ENCODE measurements at regions of chr10 and their contacts with region 1.

Region 1: GRCh38 chr10:62050893-62051433 is 149.5 kb downstream of the ARID5B start:
- DNase-seq: peak; percentile 80 to 87
- ATAC-seq: peak; percentile 62 to 70
- H3K4me3 ChIP-seq: peak overlapping the region; percentile 70 to 79 (median 74)
- H3K27ac ChIP-seq: peak overlapping the region; percentile 95 to 99 (median 96)
- H3K4me1 ChIP-seq: peaks cover 35 to 64% of the 10 kb centered on the region in 2 donors
- H3K27me3 ChIP-seq: no peaks in the 10 kb centered on the region
- CTCF ChIP-seq: no peak
- POLR2A ChIP-seq: peak; percentile 81 to 94

Region 2: DNA sequence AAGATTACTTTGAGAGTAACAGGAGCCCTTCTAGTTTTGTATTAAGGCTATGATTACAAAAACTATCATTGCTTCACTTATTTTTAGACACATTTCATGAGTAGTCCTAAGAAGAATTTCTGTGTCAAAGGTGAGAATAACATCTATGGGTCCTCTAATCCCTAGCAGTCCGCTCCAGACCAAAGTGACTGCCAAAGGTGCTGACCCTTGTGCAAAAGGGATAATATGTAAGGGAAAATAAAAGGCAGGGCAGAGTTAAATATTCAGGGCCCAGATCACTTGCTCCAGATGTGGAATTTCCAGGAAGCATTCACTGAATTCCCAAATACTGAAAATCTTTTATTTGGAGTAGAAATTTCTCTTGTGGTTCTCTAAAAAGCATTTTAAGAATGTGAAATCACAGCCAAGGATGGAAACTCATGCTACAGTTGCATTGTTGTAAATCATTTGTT is 1136.2 kb before region 1 on chr10:
- in situ Hi-C with region 1: loop called in 1 of 4 experiments (anchors 25 kb)
- intact Hi-C with region 1: no loop called
- DNase-seq: peak in 1 of 2 donors; percentile 49
- ATAC-seq: peak; percentile 83 to 85
- H3K4me3 ChIP-seq: peak overlapping the region in 1 of 4 donors; percentile 24
- H3K27ac ChIP-seq: peak overlapping the region; percentile 82 to 96 (median 88)
- H3K4me1 ChIP-seq: peaks cover 61 to 70% of the 10 kb centered on the region in 2 donors
- H3K27me3 ChIP-seq: no peaks in the 10 kb centered on the region
- CTCF ChIP-seq: no peak
- POLR2A ChIP-seq: peak in 1 of 2 donors; percentile 36

Region 3: DNA sequence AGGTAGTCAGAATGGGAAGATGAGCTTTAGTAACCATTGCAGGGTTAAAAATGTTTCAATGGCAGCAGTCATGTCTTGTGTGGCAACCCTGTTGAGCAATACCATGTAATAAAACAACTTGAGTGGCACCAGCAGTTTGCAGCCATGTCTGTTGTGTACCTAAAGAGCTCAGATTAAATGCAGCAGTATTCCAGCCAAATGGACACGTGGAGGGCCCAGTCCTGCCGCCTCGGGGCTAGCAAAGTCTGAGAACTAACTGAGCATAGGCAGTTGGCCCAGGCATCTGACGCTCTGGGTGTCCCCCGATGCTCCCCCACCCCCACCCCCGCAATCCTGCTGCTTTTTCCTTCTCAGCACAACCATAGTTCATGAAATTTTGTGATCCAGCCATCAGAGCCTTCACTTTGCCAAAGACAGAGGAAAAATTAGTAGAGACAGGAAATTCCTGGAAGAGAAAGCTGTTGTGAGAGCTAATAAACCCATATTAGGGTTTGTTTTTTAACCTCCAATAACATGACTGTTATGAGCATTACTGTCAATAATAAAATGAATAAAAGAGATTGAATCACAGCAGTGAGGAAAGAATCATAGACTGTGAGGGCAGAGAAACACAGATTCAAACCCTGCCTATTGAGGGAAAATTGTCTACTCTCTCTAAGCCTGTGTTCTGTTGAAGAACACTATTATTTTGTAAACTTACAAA is 886.4 kb before region 1 on chr10:
- in situ Hi-C with region 1: no loop called
- intact Hi-C with region 1: loop called (anchors 5 kb)
- DNase-seq: peak; percentile 91 to 92
- ATAC-seq: peak; percentile 84
- H3K4me3 ChIP-seq: peak overlapping the region in 1 of 4 donors; percentile 9
- H3K27ac ChIP-seq: peak overlapping the region; percentile 88 to 96 (median 92)
- H3K4me1 ChIP-seq: peaks cover 34 to 39% of the 10 kb centered on the region in 2 donors
- H3K27me3 ChIP-seq: no peaks in the 10 kb centered on the region
- CTCF ChIP-seq: no peak
- POLR2A ChIP-seq: no peak

Region 4: DNA sequence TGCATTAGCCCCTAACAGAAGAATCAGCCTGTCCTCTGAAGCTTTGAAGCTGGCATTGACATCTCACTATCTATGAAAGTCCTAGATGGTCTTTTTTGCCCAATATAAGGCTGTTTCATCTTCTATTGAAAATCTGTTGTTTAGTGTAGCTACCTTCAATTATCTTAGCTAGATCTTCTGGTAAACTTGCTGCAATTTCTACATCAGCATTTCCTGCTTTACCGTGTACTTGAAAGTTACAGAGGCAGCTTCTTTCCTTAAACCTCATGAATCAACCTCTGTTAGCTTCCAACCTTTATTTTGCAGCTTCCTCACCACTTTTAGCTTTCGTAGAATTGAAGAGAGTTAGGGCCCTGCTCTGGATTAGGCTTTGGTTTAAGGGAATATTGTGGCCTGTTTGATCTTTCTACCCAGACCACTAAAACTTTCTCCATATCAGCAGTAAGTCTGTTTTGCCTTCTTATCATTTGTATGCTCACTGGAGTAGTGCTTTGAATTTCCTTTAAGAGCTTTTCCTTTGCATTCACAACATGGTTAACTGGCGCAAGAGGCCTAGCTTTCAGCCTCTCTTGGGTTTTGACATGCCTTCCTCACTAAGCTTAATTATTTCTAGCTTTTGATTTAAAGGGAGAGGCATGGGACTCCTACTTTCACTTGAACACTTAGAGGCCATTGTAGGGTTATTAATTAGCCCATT is 117.0 kb before region 1 on chr10:
- in situ Hi-C with region 1: no loop called
- intact Hi-C with region 1: no loop called
- DNase-seq: no peak
- ATAC-seq: no peak
- H3K4me3 ChIP-seq: no peak overlapping the region
- H3K27ac ChIP-seq: no peak overlapping the region
- H3K4me1 ChIP-seq: peaks cover 20% of the 10 kb centered on the region in 2 donors
- H3K27me3 ChIP-seq: no peaks in the 10 kb centered on the region
- CTCF ChIP-seq: no peak
- POLR2A ChIP-seq: no peak

Region 5: GRCh38 chr10:61992671-61993668 is 58.0 kb before region 1 on chr10:
- in situ Hi-C with region 1: no loop called
- intact Hi-C with region 1: loop called (anchors 5 kb)
- DNase-seq: peak; percentile 59 to 70
- ATAC-seq: peak; percentile 97 to 98
- H3K4me3 ChIP-seq: peak overlapping the region; percentile 14 to 44 (median 36)
- H3K27ac ChIP-seq: peak overlapping the region; percentile 64 to 73 (median 66)
- H3K4me1 ChIP-seq: peaks cover 17 to 42% of the 10 kb centered on the region in 2 donors
- H3K27me3 ChIP-seq: no peaks in the 10 kb centered on the region
- CTCF ChIP-seq: no peak
- POLR2A ChIP-seq: peak in 1 of 2 donors; percentile 20

Region 6: DNA sequence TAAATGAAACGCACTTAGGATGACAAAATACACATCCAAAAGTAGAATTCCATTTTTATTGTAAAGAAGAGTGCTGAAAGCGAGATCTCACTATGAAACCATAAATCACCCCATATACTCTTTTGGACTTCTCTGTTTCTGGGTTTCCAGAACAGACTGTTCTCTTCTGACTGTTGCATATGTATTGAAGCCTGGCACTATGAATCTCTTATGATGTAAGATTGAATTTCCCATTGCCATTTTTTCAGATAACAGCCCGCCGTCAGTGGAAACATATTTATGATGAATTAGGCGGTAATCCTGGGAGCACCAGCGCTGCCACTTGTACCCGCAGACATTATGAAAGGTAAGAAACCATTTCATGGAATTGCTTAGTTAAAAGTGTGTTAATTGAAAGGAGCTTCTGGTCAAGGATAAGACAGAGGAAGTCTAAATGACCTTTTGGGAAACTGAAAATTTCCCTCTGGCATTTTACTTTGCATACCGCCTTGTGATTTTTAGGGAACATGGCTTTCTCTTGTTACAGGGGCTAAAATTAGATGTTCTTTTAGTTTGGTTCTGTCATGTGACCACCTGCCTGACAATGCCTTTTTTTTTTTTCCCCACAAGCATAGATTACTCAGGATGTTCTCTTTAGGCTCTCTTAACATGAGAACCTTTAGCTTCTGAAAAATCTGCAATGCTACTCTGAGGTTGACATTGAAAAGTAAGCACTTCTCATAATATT is 18.7 kb after region 1 on chr10:
- in situ Hi-C with region 1: no loop called
- intact Hi-C with region 1: loop called (anchors 1 kb)
- DNase-seq: no peak
- ATAC-seq: peak; percentile 67 to 82
- H3K4me3 ChIP-seq: peak overlapping the region; percentile 2 to 40 (median 36)
- H3K27ac ChIP-seq: peak overlapping the region; percentile 95 to 99 (median 96)
- H3K4me1 ChIP-seq: peaks cover 90 to 97% of the 10 kb centered on the region in 2 donors
- H3K27me3 ChIP-seq: no peaks in the 10 kb centered on the region
- CTCF ChIP-seq: no peak
- POLR2A ChIP-seq: peak in 1 of 2 donors; percentile 41

Region 7: GRCh38 chr10:62231371-62231770 is 180.4 kb after region 1 on chr10:
- in situ Hi-C with region 1: no loop called
- intact Hi-C with region 1: no loop called
- DNase-seq: no peak
- ATAC-seq: no peak
- H3K4me3 ChIP-seq: no peak overlapping the region
- H3K27ac ChIP-seq: no peak overlapping the region
- H3K4me1 ChIP-seq: no peaks in the 10 kb centered on the region
- H3K27me3 ChIP-seq: no peaks in the 10 kb centered on the region
- CTCF ChIP-seq: no peak
- POLR2A ChIP-seq: no peak

Region 8: GRCh38 chr10:63115732-63116383 is 1064.9 kb after region 1 on chr10:
- in situ Hi-C with region 1: loop called in 1 of 4 experiments (anchors 25 kb)
- intact Hi-C with region 1: loop called (anchors 10 kb)
- DNase-seq: peak; percentile 93 to 96
- ATAC-seq: peak; percentile 93 to 95
- H3K4me3 ChIP-seq: peak overlapping the region in 1 of 4 donors; percentile 6
- H3K27ac ChIP-seq: peak overlapping the region; percentile 87 to 99 (median 93)
- H3K4me1 ChIP-seq: peaks cover 30 to 32% of the 10 kb centered on the region in 2 donors
- H3K27me3 ChIP-seq: no peaks in the 10 kb centered on the region
- CTCF ChIP-seq: peak in 1 of 5 experiments; percentile 7
- POLR2A ChIP-seq: peak; percentile 51 to 56

Region 9: DNA sequence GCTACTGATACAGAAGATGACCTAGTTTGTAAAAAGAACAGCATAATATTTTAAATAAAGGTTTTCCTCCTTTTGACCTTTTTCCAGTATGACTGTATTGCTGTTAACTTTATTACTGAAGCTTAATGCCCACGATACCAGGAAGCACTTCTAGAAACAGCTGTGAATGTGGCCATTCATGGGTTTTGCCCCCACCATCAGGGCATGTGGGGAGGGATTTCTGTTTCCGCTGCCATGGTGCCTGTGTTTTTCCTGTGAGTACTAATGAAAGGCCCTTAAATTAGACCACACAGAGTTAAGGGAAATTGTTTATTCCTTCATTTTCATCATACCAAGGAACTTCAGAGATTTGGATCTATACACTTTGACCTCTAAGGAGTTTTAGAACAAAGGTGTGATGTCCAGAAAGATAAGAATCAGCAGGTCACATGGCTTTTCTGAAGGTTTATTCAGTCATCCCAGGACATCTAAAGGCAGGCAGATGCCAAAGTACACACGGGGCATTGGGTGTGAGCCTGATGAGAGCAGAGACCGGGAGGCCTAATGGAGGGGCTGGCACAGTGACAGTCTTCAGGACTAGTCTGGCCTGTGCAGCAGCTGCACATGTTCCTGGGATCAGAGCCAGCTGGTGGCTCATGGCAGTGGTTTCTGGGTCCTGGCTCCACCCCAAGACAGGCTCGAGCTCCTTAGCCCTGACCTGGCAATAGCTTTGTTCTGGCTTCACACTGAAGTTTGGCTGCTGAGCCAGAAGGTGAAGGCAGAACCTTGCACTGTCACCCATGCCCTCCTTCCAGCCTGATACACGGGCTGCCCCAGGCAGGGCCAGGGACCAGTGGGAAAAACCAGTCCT is 1661.1 kb after region 1 on chr10:
- in situ Hi-C with region 1: loop called in 2 of 4 experiments (anchors 10 to 25 kb)
- intact Hi-C with region 1: no loop called
- DNase-seq: peak; percentile 94 to 97
- ATAC-seq: peak; percentile 84
- H3K4me3 ChIP-seq: no peak overlapping the region
- H3K27ac ChIP-seq: peak overlapping the region; percentile 81 to 88 (median 85)
- H3K4me1 ChIP-seq: peaks cover 34 to 49% of the 10 kb centered on the region in 2 donors
- H3K27me3 ChIP-seq: no peaks in the 10 kb centered on the region
- CTCF ChIP-seq: no peak
- POLR2A ChIP-seq: no peak

Measured in gastrocnemius medialis (tissue), 4 donors.